Left colon (tissue), 2 donors: ENCODE measurements at regions of chr15 and their contacts with region 1.

Region 1: GRCh38 chr15:63752075-63752684 is 81.6 kb downstream of the HERC1 start:
- DNase-seq: peak in 1 of 2 donors; percentile 34
- ATAC-seq: peak; percentile 100

Region 2: GRCh38 chr15:63872759-63873510 is 120.8 kb after region 1 on chr15:
- intact Hi-C with region 1: no loop called
- DNase-seq: no peak
- ATAC-seq: no peak

Region 3: GRCh38 chr15:63891079-63891767 is 139.0 kb after region 1 on chr15:
- intact Hi-C with region 1: loop called in 1 of 2 experiments (anchors 2 kb)
- DNase-seq: peak; percentile 56 to 89
- ATAC-seq: peak; percentile 90

Region 4: DNA sequence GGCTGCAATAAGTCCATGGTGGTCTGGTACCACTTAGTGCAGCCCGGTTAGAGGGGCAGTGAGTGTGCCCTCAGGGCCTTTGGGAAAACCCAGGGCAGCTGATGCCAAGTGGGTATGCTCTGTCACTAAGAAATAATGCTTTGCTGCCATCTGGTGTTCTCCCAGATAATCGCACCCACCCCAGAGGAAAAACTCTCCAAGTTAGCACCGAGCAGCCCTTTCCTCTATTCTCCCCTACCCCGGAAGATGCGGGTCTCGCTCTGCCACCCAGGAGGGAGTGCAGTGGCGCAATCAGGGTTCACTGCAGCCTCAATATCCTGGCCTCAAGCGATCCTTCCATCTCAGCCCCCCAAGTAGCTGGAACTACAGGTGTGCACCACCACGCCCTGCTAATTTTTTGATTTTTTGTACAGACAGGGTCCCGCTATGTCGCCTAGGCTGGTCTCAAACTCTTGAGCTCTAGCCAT is 315.4 kb after region 1 on chr15:
- intact Hi-C with region 1: loop called in 1 of 2 experiments (anchors 5 kb)
- DNase-seq: peak in 1 of 2 donors; percentile 67
- ATAC-seq: peak; percentile 80